Activated naive CD4-positive, alpha-beta T cell treated with anti-CD3 and anti-CD28 coated beads, Interleukin-2, amount 10 ng/mL, durations not matched to agents 7 days and 5 days (primary cell): ENCODE measurements at regions of chr10 and their contacts with region 1.

Region 1: DNA sequence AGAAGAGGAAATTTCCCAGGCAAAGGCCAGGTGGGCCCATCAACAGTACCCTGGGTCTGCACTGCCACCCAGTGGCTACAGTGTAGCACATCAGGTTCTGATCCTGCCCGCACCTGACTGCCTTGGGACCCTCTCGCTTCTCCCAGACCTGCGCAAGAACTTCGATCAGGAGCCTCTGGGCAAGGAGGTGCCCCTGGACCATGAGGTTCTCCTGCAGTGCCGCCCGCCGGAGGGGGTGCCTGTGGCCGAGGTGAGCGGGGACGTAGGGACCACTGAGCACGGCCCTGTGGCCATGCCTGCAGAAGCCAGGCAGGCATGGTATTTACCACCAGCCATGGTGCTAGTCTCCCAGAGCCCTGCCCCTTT is 33.9 kb upstream of the SLC29A3 start:
- DNase-seq: peak; percentile 45
- H3K4me3 Mint-ChIP-seq: no peak overlapping the region
- H3K27ac Mint-ChIP-seq: no peak overlapping the region
- H3K4me1 Mint-ChIP-seq: no peaks in the 10 kb centered on the region
- H3K27me3 Mint-ChIP-seq: no peaks in the 10 kb centered on the region

Region 2: GRCh38 chr10:70903262-70903921 is 381.8 kb before region 1 on chr10:
- CTCF ChIA-PET with region 1: interaction called, 15 read pairs
- DNase-seq: peak; percentile 41
- H3K4me3 Mint-ChIP-seq: no peak overlapping the region
- H3K27ac Mint-ChIP-seq: no peak overlapping the region
- H3K4me1 Mint-ChIP-seq: no peaks in the 10 kb centered on the region
- H3K27me3 Mint-ChIP-seq: peaks cover 14% of the 10 kb centered on the region

Region 3: GRCh38 chr10:71270301-71271220 is 14.6 kb before region 1 on chr10:
- CTCF ChIA-PET with region 1: interaction called, 17 read pairs
- DNase-seq: peak; percentile 59
- H3K4me3 Mint-ChIP-seq: no peak overlapping the region
- H3K27ac Mint-ChIP-seq: peak overlapping the region; percentile 5
- H3K4me1 Mint-ChIP-seq: peaks cover 4% of the 10 kb centered on the region
- H3K27me3 Mint-ChIP-seq: peaks cover 8% of the 10 kb centered on the region